ENCODE measurements at regions of chr1 and their contacts with region 1.

Region 1: GRCh38 chr1:182962554-182963115 is 9.7 kb upstream of the SHCBP1L start:
- DNase-seq: peak; percentile 85 to 93 (median 86)
- ATAC-seq: peak; percentile 99 to 100
- H3K4me3 ChIP-seq: peak overlapping the region; percentile 42
- H3K27ac ChIP-seq: peak overlapping the region; percentile 23
- H3K4me1 ChIP-seq: no peaks in the 10 kb centered on the region
- H3K27me3 ChIP-seq: no peaks in the 10 kb centered on the region

Region 2: DNA sequence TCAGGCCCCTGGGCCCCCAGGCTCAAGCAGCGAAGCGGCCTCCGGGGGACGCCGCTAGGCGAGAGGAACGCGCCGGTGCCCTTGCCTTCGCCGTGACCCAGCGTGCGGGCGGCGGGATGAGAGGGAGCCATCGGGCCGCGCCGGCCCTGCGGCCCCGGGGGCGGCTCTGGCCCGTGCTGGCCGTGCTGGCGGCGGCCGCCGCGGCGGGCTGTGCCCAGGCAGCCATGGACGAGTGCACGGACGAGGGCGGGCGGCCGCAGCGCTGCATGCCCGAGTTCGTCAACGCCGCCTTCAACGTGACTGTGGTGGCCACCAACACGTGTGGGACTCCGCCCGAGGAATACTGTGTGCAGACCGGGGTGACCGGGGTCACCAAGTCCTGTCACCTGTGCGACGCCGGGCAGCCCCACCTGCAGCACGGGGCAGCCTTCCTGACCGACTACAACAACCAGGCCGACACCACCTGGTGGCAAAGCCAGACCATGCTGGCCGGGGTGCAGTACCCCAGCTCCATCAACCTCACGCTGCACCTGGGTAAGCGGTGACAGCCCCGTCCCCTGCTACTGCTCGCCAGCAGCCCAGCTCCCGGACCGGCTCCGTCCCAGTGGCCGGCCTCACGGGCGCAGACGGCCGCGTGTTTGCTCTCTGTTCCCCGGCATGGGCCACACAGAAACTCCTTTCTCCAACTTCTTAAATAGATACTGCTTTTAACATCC is 61.1 kb after region 1 on chr1:
- intact Hi-C with region 1: loop called in 3 of 4 experiments (anchors 2 to 10 kb)
- DNase-seq: peak; percentile 62 to 84 (median 82)
- ATAC-seq: peak; percentile 44 to 51
- H3K4me3 ChIP-seq: peak overlapping the region; percentile 97
- H3K27ac ChIP-seq: peak overlapping the region; percentile 94
- H3K4me1 ChIP-seq: no peaks in the 10 kb centered on the region
- H3K27me3 ChIP-seq: no peaks in the 10 kb centered on the region

Region 3: GRCh38 chr1:183101841-183102276 is 139.2 kb after region 1 on chr1:
- intact Hi-C with region 1: loop called in 1 of 4 experiments (anchors 10 kb)
- DNase-seq: peak in 2 of 3 donors; percentile 48 to 62
- ATAC-seq: peak; percentile 46 to 50
- H3K4me3 ChIP-seq: no peak overlapping the region
- H3K27ac ChIP-seq: peak overlapping the region; percentile 48
- H3K4me1 ChIP-seq: peaks cover 18% of the 10 kb centered on the region
- H3K27me3 ChIP-seq: no peaks in the 10 kb centered on the region

Region 4: DNA sequence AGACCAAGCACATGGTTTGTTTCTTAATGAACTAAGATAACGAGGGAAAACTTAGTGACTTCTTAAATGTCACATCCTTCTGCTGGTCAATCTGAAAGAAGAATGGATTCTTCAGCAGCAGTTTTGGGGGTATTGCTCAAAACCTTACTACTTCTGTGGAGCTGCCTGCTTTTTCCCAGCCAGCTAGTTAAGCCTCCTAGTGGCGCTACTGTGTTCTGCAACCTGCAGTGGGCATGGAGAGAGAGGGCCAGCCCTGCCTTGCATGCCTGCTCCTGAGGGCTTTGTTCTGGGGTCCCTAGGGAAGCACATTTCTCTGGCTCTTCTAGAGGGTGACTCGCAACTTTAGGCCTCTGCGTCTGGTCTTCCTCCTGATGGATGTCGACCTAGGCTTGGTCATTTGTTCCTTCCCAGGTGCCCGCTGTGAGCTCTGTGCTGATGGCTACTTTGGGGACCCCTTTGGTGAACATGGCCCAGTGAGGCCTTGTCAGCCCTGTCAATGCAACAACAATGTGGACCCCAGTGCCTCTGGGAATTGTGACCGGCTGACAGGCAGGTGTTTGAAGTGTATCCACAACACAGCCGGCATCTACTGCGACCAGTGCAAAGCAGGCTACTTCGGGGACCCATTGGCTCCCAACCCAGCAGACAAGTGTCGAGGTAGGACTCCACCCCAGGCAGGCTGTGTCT is 265.5 kb after region 1 on chr1:
- intact Hi-C with region 1: loop called (anchors 2 to 10 kb)
- DNase-seq: peak; percentile 51 to 82 (median 72)
- ATAC-seq: peak; percentile 34 to 78
- H3K4me3 ChIP-seq: no peak overlapping the region
- H3K27ac ChIP-seq: no peak overlapping the region
- H3K4me1 ChIP-seq: no peaks in the 10 kb centered on the region
- H3K27me3 ChIP-seq: no peaks in the 10 kb centered on the region

Measured in right cardiac atrium (tissue), 5 donors.